Panc1 (cell line): ENCODE measurements at regions of chr2 and their contacts with region 1.

Region 1: DNA sequence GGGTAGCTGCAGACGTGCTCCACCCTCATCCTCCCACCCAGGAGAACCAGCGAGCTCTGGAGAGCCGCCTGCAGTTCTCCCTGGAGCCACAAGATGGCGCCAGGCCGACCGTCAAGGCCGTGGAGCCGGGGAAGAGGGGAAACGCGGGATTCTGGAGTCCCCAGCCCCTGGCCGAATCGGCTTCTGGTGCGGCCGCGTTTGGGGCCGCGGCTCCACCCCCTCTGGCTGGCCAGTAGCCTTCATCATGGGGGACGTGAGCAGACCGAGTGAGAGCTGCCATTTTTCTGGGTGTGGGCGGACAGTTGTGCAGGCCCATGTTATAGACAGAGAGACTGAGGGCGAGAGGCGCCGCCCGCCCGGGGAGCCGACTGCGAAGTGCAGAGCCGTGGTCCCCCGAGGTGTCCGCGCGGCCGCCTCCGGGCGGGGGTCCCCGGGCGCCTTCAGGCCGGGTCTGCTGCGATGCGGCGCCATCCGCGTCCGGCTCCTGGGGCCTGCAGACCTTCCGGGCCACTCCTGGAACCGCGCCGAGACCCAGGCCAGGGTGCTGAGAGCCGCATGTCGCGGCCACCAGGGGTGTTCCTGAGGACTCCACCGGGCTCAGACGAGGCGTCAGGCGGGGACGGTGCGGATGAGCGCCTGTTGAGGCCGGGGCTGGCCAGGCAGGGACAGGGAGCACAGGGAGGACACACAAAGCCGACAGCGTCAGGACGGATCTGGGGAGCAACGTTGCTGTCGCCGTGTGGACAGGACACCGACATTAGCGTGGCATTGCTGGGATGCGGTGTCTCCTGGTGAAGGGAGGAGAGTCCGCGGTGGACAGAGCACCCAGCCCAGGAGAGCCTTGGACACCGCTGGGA is 418.2 kb upstream of the HS6ST1 start:
- DNase-seq: peak; percentile 12
- ATAC-seq: peak; percentile 89
- H3K4me3 ChIP-seq: peak overlapping the region; percentile 15 to 33; a peak in 1 of 4 replicates
- H3K27ac ChIP-seq: no peak overlapping the region
- H3K4me1 ChIP-seq: no peaks in the 10 kb centered on the region
- H3K27me3 ChIP-seq: no peaks in the 10 kb centered on the region
- CTCF ChIP-seq: peak; percentile 98

Region 2: DNA sequence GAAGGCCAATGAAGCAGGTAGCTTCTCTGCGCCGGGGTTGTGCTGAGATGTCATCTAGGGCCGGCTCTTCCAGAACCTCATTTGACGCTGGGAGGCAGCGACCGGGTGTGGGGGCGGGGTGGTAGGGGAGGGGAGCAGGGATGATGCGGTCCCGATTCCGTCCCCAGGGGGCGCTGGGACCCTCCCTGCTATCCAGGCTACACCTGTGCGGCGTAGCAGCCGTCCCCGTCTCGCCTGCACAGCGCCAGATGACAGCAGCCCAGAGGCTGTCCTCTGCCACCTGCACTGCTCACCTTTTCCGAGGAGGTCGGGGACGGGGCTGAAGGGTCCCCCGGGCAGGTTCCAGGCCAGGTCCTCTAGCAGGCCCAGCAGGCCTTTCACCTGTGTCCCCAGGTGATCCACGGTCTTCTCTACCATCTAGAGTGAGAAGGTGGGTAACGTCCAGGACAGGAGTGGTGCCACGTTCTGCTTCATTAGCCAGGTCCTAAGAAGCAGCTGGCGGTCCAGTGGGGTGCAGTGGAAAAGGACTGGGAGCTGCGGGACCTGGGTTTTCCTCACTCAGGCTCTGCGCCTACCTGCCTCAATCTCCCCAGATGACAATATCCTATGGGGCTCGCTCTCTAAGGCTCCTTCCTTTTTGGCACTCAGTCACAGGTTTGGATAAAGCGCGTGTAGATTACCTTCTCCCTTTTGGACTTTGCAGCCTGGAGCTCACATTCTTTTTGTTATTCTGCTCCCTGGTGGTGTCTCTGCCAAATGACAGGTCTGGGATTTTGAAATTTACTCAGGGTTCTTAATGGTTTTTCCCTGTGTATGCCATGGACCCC is 1186.6 kb after region 1 on chr2:
- CTCF ChIA-PET with region 1: no interaction called
- POLR2A ChIA-PET with region 1: no interaction called
- in situ Hi-C with region 1: no loop called
- intact Hi-C with region 1: loop called (anchors 10 kb)
- DNase-seq: peak; percentile 17
- ATAC-seq: peak; percentile 88
- H3K4me3 ChIP-seq: peak overlapping the region in 1 of 2 experiments; percentile 17; a peak in 1 of 4 replicates
- H3K27ac ChIP-seq: no peak overlapping the region
- H3K4me1 ChIP-seq: peaks cover 3% of the 10 kb centered on the region
- H3K27me3 ChIP-seq: peaks cover 3% of the 10 kb centered on the region; the same call in 1 of the 2 replicates
- CTCF ChIP-seq: peak; percentile 58